ENCODE measurements at regions of chrX and their contacts with region 1.

Region 1: GRCh38 chrX:153763989-153764755 is at the start of gene PLXNB3:
- DNase-seq: peak; percentile 93
- total RNA-seq, gene PLXNB3: 7.6 TPM

Region 2: DNA sequence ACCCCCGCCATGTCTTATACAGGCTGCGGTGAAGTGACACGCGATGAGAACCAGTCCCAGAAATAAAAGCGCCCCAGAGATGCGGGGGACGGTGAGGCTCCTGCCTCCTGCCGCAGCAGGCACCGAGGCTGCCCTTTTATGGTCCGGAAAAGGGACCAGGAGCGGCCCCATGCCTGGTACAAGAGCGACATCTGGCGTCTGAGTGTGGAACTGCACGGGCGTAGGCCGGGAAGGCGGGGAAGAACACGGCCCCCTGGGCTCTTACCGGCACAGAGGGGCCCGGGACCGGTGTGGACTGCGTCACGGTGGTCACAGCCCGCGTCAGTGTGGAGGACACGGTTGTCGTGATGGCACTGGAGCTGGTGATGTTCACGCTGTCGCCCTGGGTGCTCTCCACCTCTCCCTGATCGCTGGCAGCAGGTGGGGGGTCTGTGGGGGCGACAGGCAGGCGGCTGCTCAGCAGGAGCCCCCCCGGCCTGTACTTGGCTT is 189.2 kb after region 1 on chrX:
- intact Hi-C with region 1: loop called (anchors 2 kb)
- DNase-seq: peak; percentile 93